ENCODE measurements at regions of chr3 and their contacts with region 1.

Region 1: DNA sequence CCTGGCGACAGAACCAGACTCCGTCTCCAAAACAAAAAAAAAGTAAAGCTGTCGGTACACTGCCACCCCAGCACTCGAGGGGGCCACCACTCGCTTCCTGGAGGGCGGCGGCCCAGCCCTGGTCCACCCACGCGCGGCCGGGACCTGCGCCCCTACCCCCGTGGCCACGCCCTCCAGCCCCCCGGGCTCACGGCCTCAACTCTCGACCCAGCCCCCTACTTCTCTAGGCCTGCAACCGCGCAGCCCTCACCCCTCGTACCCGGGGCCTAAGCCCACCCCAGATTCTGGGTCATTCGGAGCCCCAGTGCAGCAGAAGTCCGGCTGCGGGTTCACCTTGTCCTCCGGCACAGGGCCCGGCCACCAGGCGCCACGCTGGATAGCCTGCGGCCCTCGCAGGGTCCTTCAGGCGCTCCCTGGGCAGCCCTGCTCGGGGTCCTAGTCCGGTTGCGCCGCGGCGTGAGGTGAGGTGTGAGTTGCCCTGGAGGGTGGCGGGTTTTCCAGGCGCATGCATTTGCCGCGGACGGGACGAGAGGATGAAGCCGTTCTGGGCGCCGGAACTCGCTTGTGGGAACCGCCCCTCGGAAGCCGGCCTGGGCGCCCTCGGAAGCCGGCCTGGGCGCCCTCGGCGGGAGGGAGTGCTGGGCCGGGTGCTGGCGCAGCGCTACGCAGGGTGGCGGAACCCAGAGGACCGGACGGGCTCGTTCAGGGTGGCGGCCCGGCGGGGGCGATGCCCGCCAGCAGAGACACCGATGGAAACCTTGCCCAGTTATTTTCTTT is 32.3 kb downstream of the SPINK8 start:
- DNase-seq: peak; percentile 69 to 95 (median 81)
- ATAC-seq: peak; percentile 97
- H3K4me3 ChIP-seq: peak within 1 kb of the TSS; percentile 89
- H3K4me3 Mint-ChIP-seq: peak within 1 kb of the TSS; percentile 84 to 97 (median 91)
- H3K27ac ChIP-seq: peak within 1 kb of the TSS; percentile 96
- H3K27ac Mint-ChIP-seq: peak within 1 kb of the TSS; percentile 81 to 98 (median 94)
- H3K4me1 ChIP-seq: peaks cover 10 to 12% of the 10 kb centered on the region in 2 donors
- H3K4me1 Mint-ChIP-seq: peaks cover 26 to 47% (median 40%) of the 10 kb centered on the region in 7 donors
- H3K27me3 ChIP-seq: no peaks in the 10 kb centered on the region
- H3K27me3 Mint-ChIP-seq: peaks cover 0 to 13% (median 0%) of the 10 kb centered on the region in 5 donors

Region 2: DNA sequence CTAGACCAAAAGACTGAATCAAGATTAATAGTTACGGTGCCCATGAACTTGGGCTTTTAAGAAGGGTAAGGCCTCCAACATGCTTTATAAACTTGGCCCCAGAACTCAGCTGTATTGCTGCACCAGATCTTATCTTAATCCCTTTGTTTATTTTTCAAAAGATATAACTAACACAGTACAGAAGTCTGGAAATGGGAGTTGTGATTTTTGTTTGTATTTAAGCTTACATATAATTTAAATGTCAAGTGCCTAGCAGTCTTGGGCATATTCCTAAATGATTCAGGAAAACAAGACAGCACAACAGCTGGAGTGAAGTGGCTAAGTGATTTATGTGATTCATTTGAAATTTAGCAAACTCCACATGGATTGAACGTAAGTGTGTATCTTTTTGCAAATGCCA is 1265.6 kb before region 1 on chr3:
- CTCF ChIA-PET with region 1: no interaction called
- POLR2A ChIA-PET with region 1: no interaction called
- intact Hi-C with region 1: loop called in 1 of 2 experiments (anchors 5 kb)
- DNase-seq: no peak
- ATAC-seq: no peak
- H3K4me3 ChIP-seq: no peak overlapping the region
- H3K4me3 Mint-ChIP-seq: no peak overlapping the region
- H3K27ac ChIP-seq: peak overlapping the region; percentile 19
- H3K27ac Mint-ChIP-seq: peak overlapping the region in 7 of 9 donors; percentile 40 to 87 (median 73)
- H3K4me1 ChIP-seq: peaks cover 9 to 14% of the 10 kb centered on the region in 2 donors
- H3K4me1 Mint-ChIP-seq: peaks cover 15 to 52% (median 36%) of the 10 kb centered on the region in 7 donors
- H3K27me3 ChIP-seq: no peaks in the 10 kb centered on the region
- H3K27me3 Mint-ChIP-seq: no peaks in the 10 kb centered on the region

Region 3: GRCh38 chr3:47961815-47962618 is 339.2 kb before region 1 on chr3:
- CTCF ChIA-PET with region 1: no interaction called
- POLR2A ChIA-PET with region 1: no interaction called
- intact Hi-C with region 1: no loop called
- DNase-seq: peak in 8 of 9 donors; percentile 16 to 60 (median 42)
- ATAC-seq: peak; percentile 59
- H3K4me3 ChIP-seq: no peak overlapping the region
- H3K4me3 Mint-ChIP-seq: peak overlapping the region; percentile 26 to 79 (median 62)
- H3K27ac ChIP-seq: no peak overlapping the region
- H3K27ac Mint-ChIP-seq: peak overlapping the region; percentile 25 to 86 (median 74)
- H3K4me1 ChIP-seq: peaks cover 16 to 17% of the 10 kb centered on the region in 2 donors
- H3K4me1 Mint-ChIP-seq: peaks cover 17 to 41% (median 33%) of the 10 kb centered on the region in 7 donors
- H3K27me3 ChIP-seq: no peaks in the 10 kb centered on the region
- H3K27me3 Mint-ChIP-seq: no peaks in the 10 kb centered on the region

Region 4: DNA sequence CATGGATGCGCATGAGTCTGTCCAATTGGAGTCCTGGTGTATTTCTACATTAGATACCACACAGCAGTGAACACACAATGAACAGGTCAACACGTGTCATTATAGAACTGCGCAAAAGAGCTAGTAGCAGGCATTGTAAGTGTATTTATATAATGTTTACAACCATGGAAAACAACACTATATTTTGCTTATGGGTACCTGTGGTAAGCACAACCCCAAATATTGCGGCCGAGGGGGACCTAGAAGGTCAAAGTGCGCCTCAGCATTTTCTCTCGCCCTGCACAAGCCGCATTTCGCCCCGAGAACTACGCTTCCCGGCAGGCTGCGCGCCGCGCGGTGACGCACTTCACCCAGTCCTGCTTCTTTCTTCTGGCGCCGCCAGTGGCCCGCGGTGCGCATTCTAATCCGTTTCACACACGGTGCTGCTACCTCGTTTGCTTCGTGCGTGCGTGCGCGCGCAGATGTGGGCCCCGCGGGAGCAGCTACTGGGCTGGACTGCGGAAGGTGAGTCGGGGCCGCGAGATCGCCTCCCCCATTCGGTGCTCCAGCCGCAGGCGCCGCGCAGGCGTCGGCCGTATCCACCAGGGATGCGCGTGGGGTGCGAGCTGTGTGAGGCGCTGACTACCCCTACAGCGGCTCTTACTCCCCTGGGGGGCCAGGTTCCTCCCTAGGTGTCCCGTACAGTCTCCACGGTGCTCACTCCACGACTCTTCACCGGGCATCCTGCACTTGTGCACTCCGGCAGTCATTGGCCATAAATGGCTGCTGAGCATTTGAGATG is 60.3 kb before region 1 on chr3 and contains the start of gene ZNF589:
- CTCF ChIA-PET with region 1: no interaction called
- POLR2A ChIA-PET with region 1: interaction called, 5 read pairs
- intact Hi-C with region 1: loop called (anchors 1 to 2 kb)
- DNase-seq: peak; percentile 87 to 96 (median 92)
- ATAC-seq: peak; percentile 99
- H3K4me3 ChIP-seq: peak within 1 kb of the TSS; percentile 92
- H3K4me3 Mint-ChIP-seq: peak within 1 kb of the TSS; percentile 82 to 94 (median 92)
- H3K27ac ChIP-seq: peak within 1 kb of the TSS; percentile 79
- H3K27ac Mint-ChIP-seq: peak within 1 kb of the TSS; percentile 88 to 96 (median 93)
- H3K4me1 ChIP-seq: peaks cover 7 to 14% of the 10 kb centered on the region in 2 donors
- H3K4me1 Mint-ChIP-seq: peaks cover 5 to 36% (median 25%) of the 10 kb centered on the region in 7 donors
- H3K27me3 ChIP-seq: no peaks in the 10 kb centered on the region
- H3K27me3 Mint-ChIP-seq: no peaks in the 10 kb centered on the region
- total RNA-seq, gene ZNF589: 37.7 to 64.0 (median 40.2) TPM

Region 5: GRCh38 chr3:48273594-48274211 is 27.5 kb before region 1 on chr3:
- CTCF ChIA-PET with region 1: interaction called, 5 read pairs
- POLR2A ChIA-PET with region 1: interaction called, 8 read pairs
- intact Hi-C with region 1: loop called (anchors 1 kb)
- DNase-seq: peak in 8 of 9 donors; percentile 37 to 66 (median 55)
- ATAC-seq: peak; percentile 60
- H3K4me3 ChIP-seq: no peak overlapping the region
- H3K4me3 Mint-ChIP-seq: no peak overlapping the region
- H3K27ac ChIP-seq: no peak overlapping the region
- H3K27ac Mint-ChIP-seq: peak overlapping the region in 4 of 9 donors; percentile 8 to 74 (median 51)
- H3K4me1 ChIP-seq: peaks cover 4 to 14% of the 10 kb centered on the region in 2 donors
- H3K4me1 Mint-ChIP-seq: peaks cover 6 to 29% (median 21%) of the 10 kb centered on the region in 7 donors
- H3K27me3 ChIP-seq: no peaks in the 10 kb centered on the region
- H3K27me3 Mint-ChIP-seq: no peaks in the 10 kb centered on the region

Region 6: GRCh38 chr3:48898383-48899234 is 597.4 kb after region 1 on chr3 and contains the start of gene SLC25A20:
- CTCF ChIA-PET with region 1: no interaction called
- POLR2A ChIA-PET with region 1: no interaction called
- intact Hi-C with region 1: loop called in 1 of 2 experiments (anchors 2 kb)
- DNase-seq: peak; percentile 78 to 95 (median 85)
- ATAC-seq: peak; percentile 98
- H3K4me3 ChIP-seq: peak within 1 kb of the TSS; percentile 91
- H3K4me3 Mint-ChIP-seq: peak within 1 kb of the TSS; percentile 89 to 99 (median 94)
- H3K27ac ChIP-seq: peak within 1 kb of the TSS; percentile 76
- H3K27ac Mint-ChIP-seq: peak within 1 kb of the TSS; percentile 83 to 99 (median 93)
- H3K4me1 ChIP-seq: peaks cover 21 to 23% of the 10 kb centered on the region in 2 donors
- H3K4me1 Mint-ChIP-seq: peaks cover 27 to 51% (median 41%) of the 10 kb centered on the region in 7 donors
- H3K27me3 ChIP-seq: no peaks in the 10 kb centered on the region
- H3K27me3 Mint-ChIP-seq: no peaks in the 10 kb centered on the region
- total RNA-seq, gene SLC25A20: 6.6 to 27.3 (median 12.8) TPM

Measured in naive thymus-derived CD4-positive, alpha-beta T cell (primary cell).